ENCODE measurements at regions of chr1 and their contacts with region 1.

Region 1: DNA sequence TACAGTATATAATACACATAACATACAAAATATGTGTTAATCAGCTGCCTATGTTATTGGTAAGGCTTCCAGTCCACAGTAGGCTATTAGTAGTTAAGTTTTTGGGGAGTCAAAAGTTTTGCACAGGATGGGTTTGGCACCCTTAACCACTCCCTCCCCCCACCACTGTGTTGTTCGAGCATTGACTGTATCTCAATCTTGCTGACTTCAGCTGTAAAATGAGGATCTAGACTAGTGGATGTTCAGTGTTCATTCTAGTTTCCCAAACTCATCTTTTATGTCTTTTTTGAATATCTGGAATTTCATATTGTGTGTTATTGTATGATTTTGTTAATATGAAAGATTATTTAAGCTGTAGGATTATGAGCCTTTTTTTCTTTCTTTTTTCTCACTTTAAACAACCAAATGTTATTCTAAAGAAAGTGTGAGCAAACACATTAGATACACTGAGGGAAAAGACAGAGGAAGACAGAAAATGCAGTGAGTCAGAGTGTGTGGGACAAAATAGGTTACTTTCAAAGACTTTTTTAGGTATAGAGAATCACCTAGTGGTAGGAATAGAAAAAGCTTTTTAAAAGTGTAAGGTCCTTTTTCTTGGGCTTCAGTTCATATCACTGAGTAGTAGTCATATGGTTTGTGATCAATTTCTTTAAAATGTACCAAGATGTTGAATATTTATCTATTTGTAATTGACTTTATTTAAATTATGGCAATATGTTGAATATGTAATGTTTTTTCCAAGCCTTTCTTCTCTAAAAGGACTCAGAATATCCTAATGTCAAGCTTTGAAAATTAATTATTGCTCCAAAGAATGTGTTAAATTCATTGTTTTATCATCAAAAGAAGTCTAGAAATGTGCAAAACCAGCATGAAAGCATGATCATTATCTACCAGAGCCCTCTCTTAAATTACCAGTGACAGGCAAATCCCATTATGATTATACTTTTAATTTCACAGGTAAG is 17.9 kb upstream of the CENPF start:
- DNase-seq: peak in 1 of 2 experiments; percentile 73
- H3K4me3 ChIP-seq: no peak overlapping the region
- H3K27ac ChIP-seq: no peak overlapping the region
- H3K4me1 ChIP-seq: peaks cover 30% of the 10 kb centered on the region
- H3K27me3 ChIP-seq: no peaks in the 10 kb centered on the region
- CTCF ChIP-seq: peak; percentile 86

Region 2: DNA sequence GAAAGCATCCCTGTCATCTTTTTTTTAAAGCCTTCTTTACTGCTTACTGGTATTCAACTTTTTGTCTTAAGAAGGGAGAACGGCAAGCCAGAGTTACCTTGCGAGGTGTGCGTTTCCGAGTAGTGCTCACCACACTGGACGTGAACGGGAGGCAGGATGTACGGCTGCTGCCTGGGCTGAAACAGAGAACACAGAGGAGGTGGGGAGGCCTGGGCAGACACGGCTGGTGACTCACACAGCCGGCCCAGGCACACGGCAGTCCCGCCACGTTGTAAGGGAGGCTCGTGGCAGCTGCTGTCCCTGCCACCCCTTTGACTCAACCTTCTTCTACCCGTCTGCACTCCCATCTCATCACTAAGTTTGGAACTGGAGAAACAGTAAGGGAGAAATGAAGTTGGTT is 198.3 kb before region 1 on chr1:
- CTCF ChIA-PET with region 1: no interaction called
- POLR2A ChIA-PET with region 1: no interaction called
- intact Hi-C with region 1: loop called (anchors 1 kb)
- DNase-seq: no peak
- H3K4me3 ChIP-seq: no peak overlapping the region
- H3K27ac ChIP-seq: no peak overlapping the region
- H3K4me1 ChIP-seq: peaks cover 3% of the 10 kb centered on the region; the same call in 1 of the 2 replicates
- H3K27me3 ChIP-seq: no peaks in the 10 kb centered on the region
- CTCF ChIP-seq: no peak

Region 3: DNA sequence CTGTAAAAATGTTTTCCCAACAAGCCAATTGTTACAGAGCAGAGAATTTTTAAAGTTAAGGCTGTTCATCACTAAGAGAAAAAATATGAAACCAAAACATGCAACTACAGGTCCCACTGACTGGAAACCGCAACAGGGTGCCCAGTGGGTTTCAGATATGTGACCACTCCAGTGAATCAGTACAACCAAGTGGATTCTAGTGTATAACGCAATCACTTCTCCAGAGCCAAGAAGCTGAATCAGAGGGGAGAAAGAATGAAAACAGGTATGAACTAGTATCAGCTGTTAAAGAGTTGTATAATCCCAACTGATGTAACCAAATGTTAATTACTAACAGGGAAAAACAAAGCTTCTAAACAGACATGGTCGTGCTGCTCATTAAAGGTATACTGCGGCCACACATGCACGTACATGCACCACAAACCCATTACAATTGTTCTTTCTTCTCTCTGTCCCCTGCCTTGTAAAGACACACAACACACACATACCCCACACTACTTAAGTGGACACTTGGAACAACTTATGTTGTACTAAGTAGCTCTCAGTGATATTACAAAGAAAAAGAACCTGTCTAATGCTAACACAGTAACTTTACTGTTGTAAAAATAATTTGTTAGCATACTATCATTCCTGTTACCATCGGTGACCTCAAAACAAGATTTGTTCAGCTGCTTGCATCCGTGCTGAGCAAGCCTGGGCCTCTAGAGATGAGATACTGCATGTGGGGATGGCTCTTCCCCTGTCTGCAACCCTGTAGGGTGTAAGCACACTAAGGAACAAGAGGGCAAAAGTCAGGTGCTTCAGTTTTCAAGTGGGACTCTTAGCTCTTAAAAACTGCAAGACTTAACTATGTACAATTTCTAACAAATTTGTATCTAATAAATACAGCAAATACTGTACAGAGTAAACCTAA is 107.9 kb before region 1 on chr1:
- CTCF ChIA-PET with region 1: no interaction called
- POLR2A ChIA-PET with region 1: no interaction called
- intact Hi-C with region 1: loop called (anchors 10 kb)
- DNase-seq: peak in 1 of 2 experiments; percentile 39
- H3K4me3 ChIP-seq: no peak overlapping the region
- H3K27ac ChIP-seq: no peak overlapping the region
- H3K4me1 ChIP-seq: peaks cover 35% of the 10 kb centered on the region
- H3K27me3 ChIP-seq: no peaks in the 10 kb centered on the region
- CTCF ChIP-seq: no peak

Region 4: DNA sequence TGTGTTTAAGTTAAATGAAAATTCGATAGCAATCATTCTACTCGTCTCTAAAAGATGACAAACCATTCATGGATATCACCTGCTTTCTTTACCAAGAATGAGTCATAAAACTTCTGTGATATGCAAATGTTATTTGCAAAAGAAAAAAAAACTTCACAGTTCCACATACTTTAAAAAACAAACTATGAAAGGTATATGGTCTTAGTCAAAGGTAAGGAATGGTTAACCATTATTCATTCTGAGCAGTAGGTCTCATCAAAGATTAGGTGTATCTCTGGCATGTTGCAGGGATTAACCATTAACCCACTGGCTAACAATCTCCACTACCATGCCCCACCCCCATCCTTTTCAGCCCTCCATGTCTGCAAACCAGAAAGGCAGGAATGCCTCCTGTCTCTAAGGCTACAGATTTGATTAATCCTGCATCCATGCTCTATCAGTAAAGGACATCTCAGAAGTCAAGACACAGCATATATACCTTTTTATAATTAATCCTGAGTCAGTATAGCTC is 78.1 kb before region 1 on chr1:
- CTCF ChIA-PET with region 1: no interaction called
- POLR2A ChIA-PET with region 1: no interaction called
- intact Hi-C with region 1: loop called (anchors 1 kb)
- DNase-seq: peak; percentile 75 to 97
- H3K4me3 ChIP-seq: peak overlapping the region; percentile 6; the same call in 1 of the 2 replicates
- H3K27ac ChIP-seq: peak overlapping the region; percentile 13; the same call in 1 of the 2 replicates
- H3K4me1 ChIP-seq: peaks cover 47% of the 10 kb centered on the region
- H3K27me3 ChIP-seq: no peaks in the 10 kb centered on the region
- CTCF ChIP-seq: no peak

Region 5: GRCh38 chr1:214525535-214526019 is 59.5 kb before region 1 on chr1:
- CTCF ChIA-PET with region 1: no interaction called
- POLR2A ChIA-PET with region 1: interaction called, 3 read pairs
- intact Hi-C with region 1: loop called (anchors 2 kb)
- DNase-seq: peak; percentile 77 to 96
- H3K4me3 ChIP-seq: peak overlapping the region; percentile 4; the same call in 1 of the 2 replicates
- H3K27ac ChIP-seq: peak overlapping the region; percentile 43
- H3K4me1 ChIP-seq: peaks cover 37% of the 10 kb centered on the region
- H3K27me3 ChIP-seq: no peaks in the 10 kb centered on the region
- CTCF ChIP-seq: no peak

Region 6: GRCh38 chr1:214864896-214865688 is 280.0 kb after region 1 on chr1:
- CTCF ChIA-PET with region 1: no interaction called
- POLR2A ChIA-PET with region 1: no interaction called
- intact Hi-C with region 1: no loop called
- DNase-seq: peak in 1 of 2 experiments; percentile 42
- H3K4me3 ChIP-seq: no peak overlapping the region
- H3K27ac ChIP-seq: no peak overlapping the region
- H3K4me1 ChIP-seq: peaks cover 13% of the 10 kb centered on the region; the same call in 1 of the 2 replicates
- H3K27me3 ChIP-seq: no peaks in the 10 kb centered on the region
- CTCF ChIP-seq: no peak

Region 7: DNA sequence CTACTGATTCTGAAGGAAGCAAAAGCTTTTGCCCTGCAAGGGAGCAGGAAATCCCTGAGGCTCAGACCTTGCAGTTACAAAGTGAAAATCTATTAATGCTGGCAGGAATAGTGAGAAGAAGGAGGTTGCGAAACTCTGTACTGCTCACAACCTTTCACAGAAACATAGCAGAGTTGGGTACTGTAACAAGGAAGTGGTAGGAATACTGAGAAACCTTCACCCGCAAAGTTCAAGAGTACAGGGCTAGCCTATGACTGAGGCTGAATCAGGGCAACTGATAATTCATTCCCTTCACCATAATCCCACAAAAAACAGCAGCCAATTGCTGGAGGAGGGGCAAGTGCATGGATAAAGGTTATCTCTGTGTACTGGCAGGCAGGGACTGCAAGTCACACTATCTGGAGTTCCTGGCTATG is 958.1 kb after region 1 on chr1:
- CTCF ChIA-PET with region 1: no interaction called
- POLR2A ChIA-PET with region 1: interaction called, 13 read pairs
- intact Hi-C with region 1: no loop called
- DNase-seq: peak; percentile 23 to 72
- H3K4me3 ChIP-seq: no peak overlapping the region
- H3K27ac ChIP-seq: peak overlapping the region; percentile 56
- H3K4me1 ChIP-seq: 0 out of 2 replicates have a peak, but pooled peaks cover 5% of the 10 kb centered on the region
- H3K27me3 ChIP-seq: no peaks in the 10 kb centered on the region
- CTCF ChIP-seq: no peak

Measured in PC-9 (cell line).